OCI-LY7 (cell line): ENCODE measurements at regions of chr4 and their contacts with region 1.

Region 1: DNA sequence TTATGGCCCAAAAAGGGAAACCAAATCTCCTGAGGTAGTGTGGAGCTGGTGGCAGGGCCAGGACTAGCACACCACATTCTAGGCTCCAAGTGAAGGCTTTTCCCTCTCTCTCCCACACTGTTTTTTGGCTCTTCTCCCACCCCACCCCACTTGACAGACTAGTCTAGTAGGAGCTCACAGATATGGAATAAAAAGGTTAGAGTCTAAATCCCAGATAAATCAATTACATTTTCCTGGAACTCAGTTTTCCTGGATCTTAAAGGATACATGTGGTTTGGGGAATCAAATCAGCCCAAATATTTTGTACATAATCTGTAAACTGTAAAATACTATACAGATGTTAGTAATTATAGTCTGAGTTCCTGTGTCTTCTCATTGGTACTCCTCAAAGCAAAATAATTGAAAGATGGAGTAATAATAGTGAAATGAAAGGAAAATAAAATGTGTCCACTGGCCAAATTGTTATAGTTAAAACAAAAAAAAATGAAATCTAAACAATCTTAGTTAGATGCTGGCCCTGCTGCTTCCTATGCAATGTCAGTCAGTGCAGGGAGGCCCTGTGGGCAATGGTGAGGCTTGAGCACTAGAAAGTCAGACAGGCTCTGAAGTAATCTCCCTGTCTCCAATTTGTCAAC is 370.4 kb upstream of the CPEB2 start:
- DNase-seq: no peak
- H3K4me3 ChIP-seq: no peak overlapping the region
- H3K27ac ChIP-seq: no peak overlapping the region
- H3K4me1 ChIP-seq: no peaks in the 10 kb centered on the region
- CTCF ChIP-seq: no peak

Region 2: DNA sequence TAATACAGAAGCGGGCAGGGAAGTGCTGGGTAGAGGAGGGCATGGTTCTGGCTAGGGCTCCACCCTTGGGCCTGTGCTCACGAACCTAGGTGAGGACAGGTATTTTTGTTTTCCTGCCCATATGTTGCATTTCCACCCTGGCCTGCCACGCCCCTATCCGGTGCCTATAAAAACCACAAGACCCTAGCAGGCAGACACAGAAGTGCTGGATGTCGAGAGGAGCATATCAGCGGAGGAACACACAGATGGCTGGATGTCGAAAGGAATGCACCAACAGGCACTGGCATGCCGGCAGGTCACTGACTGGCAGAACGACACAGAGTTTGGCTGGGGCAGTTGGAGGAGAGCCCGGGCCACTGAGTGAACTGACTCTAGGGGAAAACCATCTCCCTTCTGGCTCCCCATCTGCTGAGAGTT is 687.8 kb before region 1 on chr4:
- CTCF ChIA-PET with region 1: no interaction called
- POLR2A ChIA-PET with region 1: no interaction called
- intact Hi-C with region 1: no loop called
- DNase-seq: no peak
- H3K4me3 ChIP-seq: no peak overlapping the region
- H3K27ac ChIP-seq: no peak overlapping the region
- H3K4me1 ChIP-seq: no peaks in the 10 kb centered on the region
- CTCF ChIP-seq: no peak

Region 3: DNA sequence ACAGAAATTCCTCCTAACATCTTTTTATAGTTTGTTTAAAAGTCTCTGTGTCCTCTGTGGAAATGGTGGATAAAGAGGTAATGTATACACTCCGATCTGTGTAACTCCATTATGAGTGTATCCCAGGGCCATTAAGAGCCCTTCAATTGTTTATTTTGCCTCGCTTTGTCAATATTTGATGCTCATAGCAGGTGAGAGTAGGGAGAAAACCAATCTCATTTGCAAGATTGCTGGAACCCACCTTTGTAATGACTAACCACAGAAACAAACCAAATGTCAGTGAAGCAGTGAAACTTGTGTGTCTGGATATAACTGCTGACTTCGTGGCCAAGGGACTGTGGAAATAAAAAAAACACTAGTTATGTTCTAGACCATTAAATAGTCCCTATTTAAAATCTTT is 406.2 kb before region 1 on chr4:
- CTCF ChIA-PET with region 1: no interaction called
- POLR2A ChIA-PET with region 1: interaction called, 11 read pairs
- intact Hi-C with region 1: no loop called
- DNase-seq: no peak
- H3K4me3 ChIP-seq: no peak overlapping the region
- H3K27ac ChIP-seq: no peak overlapping the region
- H3K4me1 ChIP-seq: no peaks in the 10 kb centered on the region
- CTCF ChIP-seq: no peak

Region 4: DNA sequence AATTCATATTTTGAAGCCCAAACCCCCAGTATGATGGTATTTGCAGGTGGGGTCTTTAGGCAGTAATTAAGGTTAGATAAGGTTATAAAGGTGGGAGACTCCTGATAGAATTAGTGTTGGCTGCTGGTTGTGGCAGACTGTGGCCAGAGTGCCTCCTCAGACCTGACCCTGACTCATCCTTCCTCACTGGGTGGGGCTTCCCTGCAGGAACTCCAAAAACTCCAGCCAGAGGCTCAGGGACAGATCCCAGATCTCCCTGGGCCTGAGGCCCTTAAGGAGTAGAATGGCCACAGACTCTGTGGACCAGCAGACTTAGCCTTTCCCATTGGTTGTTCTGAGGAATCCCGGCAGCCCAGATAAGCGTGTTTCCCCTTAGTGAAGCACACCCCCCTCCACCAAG is 92.7 kb before region 1 on chr4:
- CTCF ChIA-PET with region 1: no interaction called
- POLR2A ChIA-PET with region 1: no interaction called
- intact Hi-C with region 1: no loop called
- DNase-seq: no peak
- H3K4me3 ChIP-seq: no peak overlapping the region
- H3K27ac ChIP-seq: no peak overlapping the region
- H3K4me1 ChIP-seq: no peaks in the 10 kb centered on the region
- CTCF ChIP-seq: no peak